ENCODE measurements at regions of chr3 and their contacts with region 1.

Region 1: DNA sequence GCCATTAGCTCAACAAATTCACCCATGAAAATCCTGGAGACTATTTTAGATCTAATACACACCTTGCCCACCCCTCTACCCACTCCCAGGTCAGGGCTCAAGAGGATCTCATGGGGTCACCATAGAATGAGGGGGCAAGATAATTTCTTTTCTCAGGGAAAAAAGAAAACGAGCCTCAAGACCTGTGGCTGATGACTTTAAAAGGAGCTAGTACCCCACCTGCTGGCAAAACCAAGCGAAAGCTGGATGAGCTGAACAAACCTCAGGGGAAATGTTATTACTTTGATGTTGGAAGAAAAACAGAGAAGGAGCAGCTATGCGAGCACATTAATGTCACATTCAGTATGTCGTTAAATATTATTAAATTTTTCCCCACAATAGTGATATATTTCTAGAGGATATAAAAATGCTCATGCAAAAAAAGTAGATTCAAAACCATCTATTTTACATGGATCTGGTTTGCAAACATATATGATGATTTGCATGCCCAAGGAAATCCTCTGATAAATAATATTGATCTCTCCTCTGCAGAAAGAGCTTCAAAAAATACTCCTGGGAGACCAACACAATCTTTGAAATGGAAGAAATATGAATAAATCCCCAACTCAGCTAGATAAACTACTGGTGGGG is 37.7 kb downstream of the PLD1 start:
- DNase-seq: no peak
- H3K4me3 ChIP-seq: no peak overlapping the region
- H3K27ac ChIP-seq: no peak overlapping the region
- H3K4me1 ChIP-seq: peaks cover 2 to 8% (median 7%) of the 10 kb centered on the region in 4 experiments; a peak in 5 of 7 replicates
- H3K27me3 ChIP-seq: no peaks in the 10 kb centered on the region
- CTCF ChIP-seq: peak; percentile 2 to 75 (median 71)
- EP300 ChIP-seq: no peak
- POLR2A ChIP-seq: no peak
- RAD21 ChIP-seq: peak; percentile 88 to 92

Region 2: DNA sequence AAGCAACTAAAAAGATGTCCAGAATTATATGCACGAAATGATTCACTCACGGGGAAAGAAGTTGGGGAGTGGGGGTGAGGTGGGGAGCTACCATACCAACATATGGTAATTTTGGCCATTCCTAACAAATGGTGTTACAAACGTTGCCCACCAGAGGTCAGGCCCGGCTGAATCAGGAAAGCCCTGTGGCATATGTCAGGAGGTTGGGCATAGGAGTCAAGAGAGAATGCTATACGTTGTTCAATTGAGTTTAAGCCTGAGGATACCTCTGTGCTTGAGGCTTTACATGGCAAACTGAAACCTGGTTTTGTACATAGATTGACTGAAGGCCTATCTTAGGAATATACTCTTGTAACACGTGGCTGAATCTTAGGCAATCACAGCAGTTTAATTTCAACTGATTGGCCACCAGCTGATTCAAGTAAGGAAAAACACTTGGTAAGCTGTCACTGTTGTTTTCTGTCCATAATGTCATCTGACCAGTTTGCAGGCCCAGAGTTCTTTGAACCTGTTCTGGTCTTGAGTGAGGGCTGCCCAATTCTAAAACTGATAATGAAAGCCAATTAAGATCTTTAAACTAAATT is 722.6 kb before region 1 on chr3:
- CTCF ChIA-PET with region 1: interaction called, 15 read pairs
- POLR2A ChIA-PET with region 1: no interaction called
- DNase-seq: peak; percentile 36 to 65
- H3K4me3 ChIP-seq: no peak overlapping the region
- H3K27ac ChIP-seq: no peak overlapping the region
- H3K4me1 ChIP-seq: no peaks in the 10 kb centered on the region
- H3K27me3 ChIP-seq: no peaks in the 10 kb centered on the region
- CTCF ChIP-seq: peak; percentile 67 to 84 (median 68)
- EP300 ChIP-seq: no peak
- POLR2A ChIP-seq: no peak
- RAD21 ChIP-seq: peak; percentile 91 to 92

Region 3: DNA sequence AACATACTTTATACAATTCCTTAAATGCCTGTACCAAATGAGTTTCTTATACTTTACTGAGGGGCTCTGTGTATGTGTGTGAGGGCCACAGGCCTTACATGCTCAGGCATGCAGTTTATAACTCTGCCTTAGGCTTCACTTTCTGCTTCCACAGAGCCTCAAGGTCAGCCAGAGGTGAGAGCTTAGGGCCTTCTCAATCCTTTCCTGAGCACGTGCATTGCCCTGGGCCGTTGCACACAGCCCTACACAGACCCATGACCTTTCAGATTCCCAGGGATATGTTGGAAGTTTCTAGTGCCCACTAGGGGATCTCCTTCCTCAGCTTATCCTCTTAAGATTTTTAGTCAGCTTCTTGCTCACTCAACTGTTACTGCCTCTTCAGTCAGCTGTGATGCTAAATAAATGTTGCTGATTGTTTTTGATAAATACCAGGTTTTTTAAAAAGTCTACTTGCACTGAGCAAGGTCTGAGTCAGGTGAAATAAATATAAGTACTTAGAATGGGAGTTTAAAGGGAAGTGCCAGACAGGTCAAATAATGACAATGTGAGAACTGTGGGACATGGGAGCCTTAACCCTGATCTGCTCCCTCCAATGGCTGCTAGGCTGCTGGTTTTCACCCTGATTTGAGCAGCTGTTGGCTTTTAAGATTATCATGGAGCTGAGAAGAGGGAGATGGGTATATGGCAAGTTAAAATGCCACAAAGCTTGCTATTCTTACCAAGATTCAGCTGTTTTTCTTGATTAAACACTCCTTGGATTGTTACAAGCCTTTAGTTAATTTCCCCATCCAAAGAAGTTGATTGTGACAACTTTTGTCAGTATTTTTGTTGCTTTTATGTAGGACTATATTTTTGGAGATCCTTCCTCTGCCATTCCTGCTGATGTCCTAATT is 131.8 kb before region 1 on chr3:
- CTCF ChIA-PET with region 1: interaction called, 49 read pairs
- POLR2A ChIA-PET with region 1: no interaction called
- DNase-seq: no peak
- H3K4me3 ChIP-seq: no peak overlapping the region
- H3K27ac ChIP-seq: no peak overlapping the region
- H3K4me1 ChIP-seq: no peaks in the 10 kb centered on the region
- H3K27me3 ChIP-seq: no peaks in the 10 kb centered on the region
- CTCF ChIP-seq: peak in 1 of 3 experiments; percentile 21; a peak in 2 of 4 replicates
- EP300 ChIP-seq: no peak
- POLR2A ChIP-seq: no peak
- RAD21 ChIP-seq: peak; percentile 25 to 33; a peak in 3 of 4 replicates

Region 4: GRCh38 chr3:171676601-171677175 is 95.9 kb before region 1 on chr3:
- CTCF ChIA-PET with region 1: interaction called, 17 read pairs
- POLR2A ChIA-PET with region 1: no interaction called
- DNase-seq: no peak
- H3K4me3 ChIP-seq: no peak overlapping the region
- H3K27ac ChIP-seq: no peak overlapping the region
- H3K4me1 ChIP-seq: no peaks in the 10 kb centered on the region
- H3K27me3 ChIP-seq: no peaks in the 10 kb centered on the region
- CTCF ChIP-seq: no peak
- EP300 ChIP-seq: no peak
- POLR2A ChIP-seq: no peak
- RAD21 ChIP-seq: no peak

Region 5: GRCh38 chr3:171731691-171732090 is 40.9 kb before region 1 on chr3:
- CTCF ChIA-PET with region 1: interaction called, 10 read pairs
- POLR2A ChIA-PET with region 1: no interaction called
- DNase-seq: no peak
- H3K4me3 ChIP-seq: no peak overlapping the region
- H3K27ac ChIP-seq: no peak overlapping the region
- H3K4me1 ChIP-seq: peaks cover 0 to 3% (median 2%) of the 10 kb centered on the region in 4 experiments; a peak in 3 of 7 replicates
- H3K27me3 ChIP-seq: no peaks in the 10 kb centered on the region
- CTCF ChIP-seq: no peak
- EP300 ChIP-seq: no peak
- POLR2A ChIP-seq: no peak
- RAD21 ChIP-seq: no peak

Region 6: GRCh38 chr3:171788546-171789351 is 16.2 kb after region 1 on chr3:
- CTCF ChIA-PET with region 1: interaction called, 24 read pairs
- POLR2A ChIA-PET with region 1: no interaction called
- DNase-seq: no peak
- H3K4me3 ChIP-seq: no peak overlapping the region
- H3K27ac ChIP-seq: no peak overlapping the region
- H3K4me1 ChIP-seq: peaks cover 0 to 3% (median 3%) of the 10 kb centered on the region in 4 experiments; a peak in 3 of 7 replicates
- H3K27me3 ChIP-seq: no peaks in the 10 kb centered on the region
- CTCF ChIP-seq: no peak
- EP300 ChIP-seq: no peak
- POLR2A ChIP-seq: no peak
- RAD21 ChIP-seq: 0 out of 4 replicates have a peak, but pooled peaks of 1 of the 2 experiments have one; percentile 7

Measured in H1 (cell line).